MCF 10A (cell line): ENCODE measurements at regions of chr11 and their contacts with region 1.

Region 1: DNA sequence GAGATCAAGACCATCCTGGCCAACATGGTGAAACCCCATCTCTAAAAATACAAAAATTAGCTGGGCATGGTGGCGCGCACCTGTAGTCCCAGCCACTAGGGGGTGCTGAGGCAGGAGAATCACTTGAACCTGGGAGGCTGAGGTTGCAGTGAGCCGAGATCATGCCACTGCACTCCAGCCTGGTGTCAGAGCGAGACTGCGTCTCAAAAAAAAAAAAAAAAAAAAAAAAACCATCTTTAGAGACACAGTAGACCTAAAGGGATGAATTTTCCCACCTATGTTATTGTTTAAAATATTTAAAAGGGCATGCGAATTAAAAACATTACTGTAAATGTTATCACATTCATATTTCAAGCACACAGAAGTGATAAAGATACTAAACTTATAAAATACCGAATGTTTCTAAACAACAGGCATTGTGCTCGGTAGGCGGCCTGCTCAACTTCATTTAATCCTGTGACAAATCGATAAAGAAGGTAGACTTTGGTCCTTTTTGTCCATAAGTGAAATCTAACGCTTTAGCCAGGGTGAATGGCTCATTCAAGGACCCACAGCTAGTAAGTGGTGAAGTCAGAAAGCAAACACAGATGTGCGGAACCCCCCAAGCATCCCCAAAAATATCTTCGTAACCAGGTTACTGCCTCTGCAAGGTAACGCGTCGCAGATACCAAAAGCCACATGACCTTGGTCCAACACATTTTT is 16.1 kb downstream of the NCAPD3 start:
- DNase-seq: peak; percentile 53
- H3K4me3 Mint-ChIP-seq: no peak overlapping the region
- H3K27ac Mint-ChIP-seq: no peak overlapping the region
- H3K4me1 Mint-ChIP-seq: peaks cover 5% of the 10 kb centered on the region
- H3K27me3 Mint-ChIP-seq: no peaks in the 10 kb centered on the region
- CTCF ChIP-seq: peak; percentile 81

Region 2: DNA sequence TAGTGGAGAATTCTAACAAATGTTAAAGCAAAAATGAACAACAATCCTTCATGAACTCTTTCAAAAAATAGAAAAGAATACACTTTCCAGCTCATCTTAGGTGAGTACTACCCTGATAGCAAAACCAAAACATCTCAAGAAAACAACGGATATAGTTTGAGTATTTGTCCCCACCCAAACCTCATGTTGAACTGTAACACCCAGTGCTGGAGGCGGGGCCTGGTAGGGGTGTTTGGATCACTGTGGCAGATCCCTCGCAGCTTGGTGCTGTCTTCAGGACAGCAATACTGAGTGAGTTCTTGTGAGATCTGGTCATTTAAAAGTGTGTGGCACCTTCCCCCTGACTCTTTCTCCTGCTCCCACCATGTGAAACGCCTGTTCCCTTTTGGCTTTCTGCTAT is 10.9 kb before region 1 on chr11:
- CTCF ChIA-PET with region 1: interaction called, 12 read pairs
- POLR2A ChIA-PET with region 1: interaction called, 4 read pairs
- intact Hi-C with region 1: no loop called
- DNase-seq: no peak
- H3K4me3 Mint-ChIP-seq: no peak overlapping the region
- H3K27ac Mint-ChIP-seq: no peak overlapping the region
- H3K4me1 Mint-ChIP-seq: no peaks in the 10 kb centered on the region
- H3K27me3 Mint-ChIP-seq: no peaks in the 10 kb centered on the region
- CTCF ChIP-seq: no peak

Region 3: DNA sequence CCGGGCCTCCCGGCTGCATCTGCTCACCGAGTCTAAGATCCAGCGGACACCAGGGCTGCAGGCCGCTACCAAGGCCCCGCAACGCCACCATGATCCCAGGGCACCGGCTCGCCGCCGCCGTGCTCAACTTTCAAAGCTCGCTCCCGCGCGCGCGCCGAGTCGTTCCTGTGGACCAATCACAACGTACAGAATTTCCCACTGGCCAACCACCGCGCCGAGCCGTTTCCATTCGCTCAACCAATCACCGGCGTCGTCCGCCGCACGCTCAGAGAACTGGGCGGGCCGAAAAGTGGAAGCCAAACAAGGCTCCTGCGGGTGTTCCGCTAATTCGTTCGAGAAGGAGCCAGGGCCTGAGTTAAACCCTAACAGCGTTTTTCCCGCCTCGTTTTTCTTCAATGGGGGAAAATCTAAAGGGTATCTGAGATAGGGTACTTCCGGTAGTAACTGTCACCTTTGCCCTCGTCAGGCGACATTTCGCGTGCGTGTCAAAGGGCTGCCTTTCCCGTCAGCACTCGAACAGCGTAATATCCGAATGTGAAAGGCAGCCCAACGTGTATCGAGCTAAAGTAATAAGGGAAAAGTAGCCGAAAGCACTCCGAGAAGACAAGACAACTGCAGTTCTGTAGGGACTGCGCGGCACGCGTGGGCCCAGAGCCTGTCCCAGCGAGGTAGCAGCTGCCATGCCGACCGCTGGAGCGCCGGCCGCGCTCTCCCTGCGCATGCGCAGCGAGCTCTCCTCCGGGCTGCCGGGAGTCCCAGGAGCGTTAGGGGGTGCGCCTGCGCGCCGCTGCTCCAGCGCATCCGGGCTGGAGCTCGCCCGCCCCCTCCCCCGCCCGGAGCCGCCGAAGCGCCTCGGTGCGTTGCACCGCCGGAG is 16.4 kb after region 1 on chr11 and contains the starts of genes NCAPD3 and VPS26B:
- CTCF ChIA-PET with region 1: interaction called, 4 read pairs
- POLR2A ChIA-PET with region 1: interaction called, 35 read pairs
- intact Hi-C with region 1: no loop called
- DNase-seq: peak; percentile 97
- H3K4me3 Mint-ChIP-seq: peak within 1 kb of the TSS; percentile 93
- H3K27ac Mint-ChIP-seq: peak within 1 kb of the TSS; percentile 93
- H3K4me1 Mint-ChIP-seq: peaks cover 41% of the 10 kb centered on the region
- H3K27me3 Mint-ChIP-seq: no peaks in the 10 kb centered on the region
- CTCF ChIP-seq: no peak
- total RNA-seq, gene NCAPD3: 19.3 and 26.7 TPM in 2 replicates
- total RNA-seq, gene VPS26B: 45.2 and 47.9 TPM in 2 replicates

Region 4: GRCh38 chr11:134244655-134245054 is 37.0 kb after region 1 on chr11:
- CTCF ChIA-PET with region 1: interaction called, 8 read pairs
- POLR2A ChIA-PET with region 1: no interaction called
- intact Hi-C with region 1: loop called (anchors 1 kb)
- DNase-seq: peak; percentile 18
- H3K4me3 Mint-ChIP-seq: no peak overlapping the region
- H3K27ac Mint-ChIP-seq: no peak overlapping the region
- H3K4me1 Mint-ChIP-seq: no peaks in the 10 kb centered on the region
- H3K27me3 Mint-ChIP-seq: no peaks in the 10 kb centered on the region
- CTCF ChIP-seq: peak; percentile 36

Region 5: GRCh38 chr11:134260983-134261382 is 53.3 kb after region 1 on chr11:
- CTCF ChIA-PET with region 1: no interaction called
- POLR2A ChIA-PET with region 1: no interaction called
- intact Hi-C with region 1: no loop called
- DNase-seq: no peak
- H3K4me3 Mint-ChIP-seq: no peak overlapping the region
- H3K27ac Mint-ChIP-seq: no peak overlapping the region
- H3K4me1 Mint-ChIP-seq: no peaks in the 10 kb centered on the region
- H3K27me3 Mint-ChIP-seq: no peaks in the 10 kb centered on the region
- CTCF ChIP-seq: no peak

Region 6: GRCh38 chr11:134466156-134466555 is 258.5 kb after region 1 on chr11:
- CTCF ChIA-PET with region 1: no interaction called
- POLR2A ChIA-PET with region 1: no interaction called
- intact Hi-C with region 1: no loop called
- DNase-seq: no peak
- H3K4me3 Mint-ChIP-seq: no peak overlapping the region
- H3K27ac Mint-ChIP-seq: no peak overlapping the region
- H3K4me1 Mint-ChIP-seq: no peaks in the 10 kb centered on the region
- H3K27me3 Mint-ChIP-seq: no peaks in the 10 kb centered on the region
- CTCF ChIP-seq: no peak